GM12878 (cell line): ENCODE measurements at regions of chr1 and their contacts with region 1.

Region 1: DNA sequence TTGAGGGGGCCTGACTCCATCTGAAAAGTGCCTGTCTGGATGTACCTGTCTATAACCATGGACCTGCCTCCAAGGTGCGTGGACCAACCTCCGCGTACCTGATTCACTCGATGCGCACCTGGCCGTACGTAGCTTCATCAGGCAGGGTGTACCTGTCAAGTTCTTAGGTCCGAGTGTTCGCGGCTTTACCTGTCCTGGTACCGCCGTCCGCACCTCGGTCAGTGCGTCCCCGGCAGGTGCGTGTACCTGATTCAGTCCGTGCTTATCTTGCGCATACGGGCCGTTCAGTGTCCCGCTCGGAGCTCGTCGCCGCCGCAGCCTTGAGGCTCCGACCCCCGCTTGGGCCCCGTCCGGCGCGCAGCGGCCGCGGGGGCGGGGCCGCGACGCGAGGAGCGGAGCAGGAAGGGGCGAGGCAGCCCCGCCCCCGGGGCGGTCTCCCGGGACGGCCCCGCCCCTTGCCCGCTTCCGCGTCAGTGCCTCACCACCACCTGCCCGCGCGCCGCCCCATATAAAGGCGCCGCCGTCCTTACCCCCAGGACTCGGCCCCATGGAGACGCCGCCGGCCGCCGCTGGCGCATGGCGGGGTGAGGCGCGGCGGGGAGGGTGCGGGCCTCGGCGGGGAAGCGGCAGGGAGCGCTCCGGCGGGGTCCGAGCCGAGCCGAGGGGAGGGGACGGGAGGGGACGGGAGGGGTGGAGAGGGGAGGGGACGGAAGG is at the start of gene ZC3H12A:
- DNase-seq: peak; percentile 57
- ATAC-seq: peak; percentile 65
- H3K4me3 ChIP-seq: peak within 1 kb of the TSS; percentile 99
- H3K27ac ChIP-seq: peak within 1 kb of the TSS; percentile 99
- H3K4me1 ChIP-seq: peaks cover 20% of the 10 kb centered on the region
- H3K27me3 ChIP-seq: no peaks in the 10 kb centered on the region
- CTCF ChIP-seq: no peak
- EP300 ChIP-seq: no peak
- POLR2A ChIP-seq: peak; percentile 99
- RAD21 ChIP-seq: no peak
- polyA plus RNA-seq, gene ZC3H12A: 0.35 to 0.88 TPM

Region 2: GRCh38 chr1:37387859-37388258 is 86.3 kb before region 1 on chr1:
- CTCF ChIA-PET with region 1: no interaction called
- POLR2A ChIA-PET with region 1: no interaction called
- RAD21 ChIA-PET with region 1: no interaction called
- SMC1A ChIA-PET with region 1: no interaction called
- in situ Hi-C with region 1: no loop called
- intact Hi-C with region 1: no loop called
- DNase-seq: no peak
- ATAC-seq: no peak
- H3K4me3 ChIP-seq: no peak overlapping the region
- H3K27ac ChIP-seq: no peak overlapping the region
- H3K4me1 ChIP-seq: no peaks in the 10 kb centered on the region
- H3K27me3 ChIP-seq: peaks cover 0 to 3% of the 10 kb centered on the region in 2 experiments; a peak in 2 of 4 replicates
- CTCF ChIP-seq: no peak
- EP300 ChIP-seq: no peak
- POLR2A ChIP-seq: no peak
- RAD21 ChIP-seq: no peak

Region 3: GRCh38 chr1:37449936-37450335 is 24.3 kb before region 1 on chr1:
- CTCF ChIA-PET with region 1: interaction called, 45 read pairs
- POLR2A ChIA-PET with region 1: no interaction called
- RAD21 ChIA-PET with region 1: interaction called, 3 read pairs
- SMC1A ChIA-PET with region 1: interaction called, 3 read pairs
- in situ Hi-C with region 1: no loop called
- intact Hi-C with region 1: no loop called
- DNase-seq: no peak
- ATAC-seq: peak; percentile 51
- H3K4me3 ChIP-seq: no peak overlapping the region
- H3K27ac ChIP-seq: no peak overlapping the region
- H3K4me1 ChIP-seq: no peaks in the 10 kb centered on the region
- H3K27me3 ChIP-seq: no peaks in the 10 kb centered on the region
- CTCF ChIP-seq: no peak
- EP300 ChIP-seq: no peak
- POLR2A ChIP-seq: no peak
- RAD21 ChIP-seq: no peak

Region 4: GRCh38 chr1:37514350-37515184 is 40.4 kb after region 1 on chr1 and contains the start of gene MEAF6:
- CTCF ChIA-PET with region 1: interaction called, 7 read pairs
- POLR2A ChIA-PET with region 1: interaction called, 28 read pairs
- RAD21 ChIA-PET with region 1: interaction called, 13 read pairs
- SMC1A ChIA-PET with region 1: interaction called, 6 read pairs
- in situ Hi-C with region 1: no loop called
- intact Hi-C with region 1: loop called (anchors 2 kb)
- DNase-seq: no peak
- ATAC-seq: peak; percentile 98
- H3K4me3 ChIP-seq: peak within 1 kb of the TSS; percentile 82
- H3K27ac ChIP-seq: peak within 1 kb of the TSS; percentile 39
- H3K4me1 ChIP-seq: peaks cover 6% of the 10 kb centered on the region
- H3K27me3 ChIP-seq: no peaks in the 10 kb centered on the region
- CTCF ChIP-seq: peak; percentile 36 to 74 (median 55); a peak in 5 of 6 replicates
- EP300 ChIP-seq: no peak
- POLR2A ChIP-seq: peak; percentile 84
- RAD21 ChIP-seq: no peak
- polyA plus RNA-seq, gene MEAF6: 30.8 to 33.3 TPM

Region 5: DNA sequence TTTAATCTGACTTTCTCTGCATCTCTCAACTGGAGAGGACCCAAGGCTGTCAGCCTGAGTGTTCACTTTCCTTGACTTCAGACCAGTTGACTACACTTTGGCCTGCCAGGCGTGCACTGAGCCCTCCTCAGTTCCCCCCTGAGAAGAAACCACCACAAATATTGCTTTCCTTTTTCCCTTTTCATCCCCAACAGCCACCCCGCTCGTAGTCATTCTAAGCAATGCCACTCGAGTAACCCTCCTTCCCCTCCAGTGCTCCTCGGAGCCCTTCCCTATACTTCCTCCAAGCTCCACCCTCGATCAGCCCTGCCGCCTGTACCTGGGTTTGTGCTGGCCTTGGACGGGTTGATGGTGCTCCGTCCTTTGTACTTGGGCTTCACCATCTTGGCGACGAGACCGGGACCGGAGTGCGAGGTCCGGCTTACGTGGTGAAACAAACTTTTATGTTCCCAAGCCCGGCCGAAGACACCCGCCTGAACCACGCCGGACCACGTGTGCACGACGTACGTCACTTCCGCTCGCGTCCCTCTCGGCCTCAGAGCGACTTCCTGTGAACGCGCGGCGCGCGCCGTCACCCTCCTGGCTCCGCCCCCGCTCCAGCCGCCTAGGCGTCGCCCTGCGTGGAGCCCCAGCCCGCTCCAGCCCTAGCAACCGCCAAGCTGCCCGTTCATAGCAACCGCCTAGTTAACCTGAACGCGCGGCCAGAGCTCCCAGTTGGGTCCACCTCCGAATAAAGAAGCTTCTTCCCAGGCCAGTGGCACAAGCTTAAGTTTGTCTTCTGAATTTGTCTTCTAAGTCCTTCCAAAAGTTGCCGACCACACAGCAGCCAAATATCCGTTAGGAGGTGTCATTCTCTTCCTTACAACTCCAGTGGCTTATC is 121.5 kb after region 1 on chr1 and contains the start of gene GNL2:
- CTCF ChIA-PET with region 1: no interaction called
- POLR2A ChIA-PET with region 1: interaction called, 6 read pairs
- RAD21 ChIA-PET with region 1: no interaction called
- SMC1A ChIA-PET with region 1: no interaction called
- in situ Hi-C with region 1: no loop called
- intact Hi-C with region 1: loop called (anchors 5 kb)
- DNase-seq: peak; percentile 83
- ATAC-seq: peak; percentile 99
- H3K4me3 ChIP-seq: peak within 1 kb of the TSS; percentile 77
- H3K27ac ChIP-seq: peak within 1 kb of the TSS; percentile 84
- H3K4me1 ChIP-seq: peaks cover 7% of the 10 kb centered on the region
- H3K27me3 ChIP-seq: no peaks in the 10 kb centered on the region
- CTCF ChIP-seq: no peak
- EP300 ChIP-seq: no peak
- POLR2A ChIP-seq: peak; percentile 96
- RAD21 ChIP-seq: no peak
- polyA plus RNA-seq, gene GNL2: 64.2 to 91.3 TPM

Region 6: DNA sequence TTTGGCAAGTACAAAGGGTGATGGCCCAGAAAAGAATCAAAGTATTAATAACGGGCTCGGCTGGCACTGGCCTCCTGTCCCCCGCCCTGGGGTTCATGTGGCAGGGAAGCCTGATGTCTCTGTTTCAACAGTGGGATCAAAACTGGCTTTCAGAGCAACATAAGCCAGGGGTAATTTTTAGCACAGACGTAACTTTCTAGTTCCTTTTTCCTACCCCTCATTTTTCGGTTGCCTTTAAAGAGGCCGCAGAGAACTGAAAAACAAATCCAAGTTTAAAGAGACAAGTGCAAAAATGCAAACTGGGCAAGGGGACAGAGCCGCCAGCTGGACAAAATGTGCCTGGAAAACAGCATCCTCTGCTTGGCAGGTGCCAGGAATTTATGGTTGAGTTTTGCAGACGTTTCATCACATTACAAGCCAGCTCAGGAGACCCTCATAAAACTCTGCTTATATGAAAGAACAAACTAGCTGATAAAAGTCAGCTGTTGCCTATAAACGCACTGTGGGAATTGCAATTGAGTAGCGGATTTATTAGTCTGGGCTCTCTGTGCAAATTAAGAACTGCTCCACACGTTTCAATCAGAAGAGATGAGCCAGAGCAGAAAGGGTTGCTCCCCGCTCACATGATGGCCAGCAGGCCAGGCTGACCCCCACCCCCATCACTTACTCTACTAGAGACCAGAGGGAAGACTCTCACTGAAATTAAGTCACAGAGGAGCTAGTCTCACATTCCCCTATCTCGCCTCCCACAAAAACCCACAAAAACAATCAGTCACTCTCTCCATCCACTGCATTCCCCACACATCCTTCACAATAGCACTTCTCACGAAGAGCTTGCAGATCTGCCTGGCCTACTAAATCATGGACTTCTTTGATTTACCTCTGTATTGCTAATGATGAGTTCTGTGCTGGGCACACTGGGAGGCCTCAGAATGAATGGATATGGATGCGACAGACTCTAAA is 202.4 kb after region 1 on chr1:
- CTCF ChIA-PET with region 1: interaction called, 6 read pairs
- POLR2A ChIA-PET with region 1: interaction called, 7 read pairs
- RAD21 ChIA-PET with region 1: interaction called, 4 read pairs
- SMC1A ChIA-PET with region 1: interaction called, 4 read pairs
- in situ Hi-C with region 1: no loop called
- intact Hi-C with region 1: loop called (anchors 5 kb)
- DNase-seq: peak; percentile 68
- ATAC-seq: peak; percentile 94
- H3K4me3 ChIP-seq: peak overlapping the region; percentile 28; the same call in 1 of the 2 replicates
- H3K27ac ChIP-seq: peak overlapping the region; percentile 93
- H3K4me1 ChIP-seq: peaks cover 27% of the 10 kb centered on the region
- H3K27me3 ChIP-seq: no peaks in the 10 kb centered on the region
- CTCF ChIP-seq: peak in 1 of 3 experiments; percentile 14; a peak in 2 of 6 replicates
- EP300 ChIP-seq: peak in 1 of 2 experiments; percentile 44; a peak in 1 of 4 replicates
- POLR2A ChIP-seq: no peak
- RAD21 ChIP-seq: peak; percentile 40; the same call in 1 of the 2 replicates